Prostate gland (tissue), 2 donors: ENCODE measurements at regions of chr13 and their contacts with region 1.

Region 1: GRCh38 chr13:92716749-92717148 is 509.9 kb upstream of the GPC6 start:
- DNase-seq: no peak
- H3K4me3 ChIP-seq: no peak overlapping the region
- H3K27ac ChIP-seq: no peak overlapping the region
- H3K4me1 ChIP-seq: no peaks in the 10 kb centered on the region
- H3K27me3 ChIP-seq: no peaks in the 10 kb centered on the region
- CTCF ChIP-seq: peak in 1 of 4 experiments; percentile 10
- POLR2A ChIP-seq: no peak

Region 2: DNA sequence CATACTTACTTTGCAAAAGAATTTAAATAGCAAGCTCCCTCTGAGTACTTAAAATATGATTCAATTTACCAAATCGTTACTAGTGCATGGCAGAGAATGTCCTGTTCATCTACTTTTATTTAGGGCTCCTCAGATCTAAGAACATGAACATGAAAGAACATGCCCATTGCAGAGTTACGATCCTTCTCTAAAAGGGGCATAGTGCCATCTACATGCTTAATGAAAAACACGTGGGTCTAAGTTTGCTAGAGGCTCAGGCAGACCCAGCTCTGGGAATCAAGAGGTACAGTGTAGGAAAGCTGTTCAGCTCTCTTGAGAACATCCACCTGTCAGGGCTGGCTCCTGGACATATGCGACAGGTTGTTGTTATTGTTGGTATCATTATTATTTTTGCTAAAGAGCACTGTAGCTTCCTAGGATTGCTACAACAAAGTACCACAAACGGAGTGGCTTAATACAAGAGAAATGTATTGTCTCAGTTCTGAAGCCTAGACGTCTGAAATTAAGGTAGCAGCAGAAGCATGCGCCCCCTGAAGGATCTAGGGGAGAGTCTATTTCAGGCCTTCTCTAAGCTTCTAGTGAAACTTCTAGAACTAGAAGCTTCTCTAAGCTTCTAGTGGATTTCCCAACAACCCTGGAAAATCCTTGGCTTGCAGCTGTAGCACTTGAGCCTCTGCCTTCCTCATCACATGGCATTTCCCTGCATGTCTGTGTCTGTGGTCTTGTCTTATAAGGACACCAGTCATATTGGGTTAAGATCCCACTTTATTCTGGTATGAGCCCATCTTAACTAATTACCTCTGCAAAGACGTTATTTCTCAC is 1628.8 kb after region 1 on chr13:
- intact Hi-C with region 1: loop called (anchors 5 kb)
- DNase-seq: peak; percentile 37
- H3K4me3 ChIP-seq: no peak overlapping the region
- H3K27ac ChIP-seq: no peak overlapping the region
- H3K4me1 ChIP-seq: no peaks in the 10 kb centered on the region
- H3K27me3 ChIP-seq: no peaks in the 10 kb centered on the region
- CTCF ChIP-seq: no peak
- POLR2A ChIP-seq: no peak